Thyroid gland (tissue), 4 donors: ENCODE measurements at regions of chr12 and their contacts with region 1.

Region 1: GRCh38 chr12:49331380-49332222 is 5.4 kb downstream of the C1QL4 start:
- DNase-seq: peak; percentile 86
- H3K4me3 ChIP-seq: no peak overlapping the region
- H3K27ac ChIP-seq: no peak overlapping the region
- H3K4me1 ChIP-seq: peaks cover 3 to 18% of the 10 kb centered on the region in 2 donors
- H3K27me3 ChIP-seq: peaks cover 6% of the 10 kb centered on the region
- CTCF ChIP-seq: peak; percentile 78 to 97 (median 90)
- POLR2A ChIP-seq: no peak

Region 2: DNA sequence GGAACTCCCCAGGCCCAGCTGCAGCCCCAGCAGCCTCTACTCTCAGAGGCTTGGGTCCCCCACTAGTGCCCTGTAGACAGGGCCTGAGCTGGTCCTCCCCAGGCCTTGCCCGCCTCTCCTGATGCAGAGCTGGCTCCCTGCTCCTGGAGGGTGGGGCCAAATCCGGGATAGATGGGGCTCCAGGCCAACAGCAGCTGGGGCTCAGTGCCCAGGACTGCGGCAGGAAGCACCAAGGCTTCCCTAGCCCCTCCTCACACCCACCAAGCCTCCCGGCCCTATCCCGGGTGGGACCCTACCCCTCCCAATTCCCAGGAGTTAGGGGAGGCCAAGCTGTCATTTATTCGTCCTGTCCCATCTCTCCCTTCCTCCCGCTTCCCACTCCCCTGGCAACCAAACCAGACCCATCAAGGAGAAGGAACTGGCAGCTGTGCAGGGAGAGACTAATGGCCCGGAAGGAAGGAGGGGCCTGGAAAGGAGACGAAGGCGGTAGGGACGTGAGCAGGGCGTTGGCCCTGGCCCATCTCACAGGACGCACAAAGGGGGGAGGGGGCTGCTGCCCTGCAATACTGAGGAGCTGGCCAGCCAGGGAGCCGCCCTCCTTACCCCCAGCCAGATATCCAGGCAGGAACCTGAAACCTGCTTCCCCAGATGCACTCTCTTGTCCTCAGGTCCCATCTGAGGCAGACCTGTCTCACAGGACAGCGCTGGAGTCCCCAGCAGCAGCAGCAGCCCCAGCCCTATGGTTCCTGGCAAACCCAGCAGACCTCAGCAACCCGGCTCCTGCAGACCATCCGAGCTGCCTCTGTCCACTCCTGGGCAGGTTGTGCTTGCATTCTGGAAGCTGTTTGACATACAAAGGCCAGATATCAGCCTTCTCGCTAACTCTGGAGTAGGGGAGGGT is 38.3 kb before region 1 on chr12:
- intact Hi-C with region 1: loop called (anchors 5 kb)
- DNase-seq: no peak
- H3K4me3 ChIP-seq: no peak overlapping the region
- H3K27ac ChIP-seq: no peak overlapping the region
- H3K4me1 ChIP-seq: peaks cover 18 to 22% of the 10 kb centered on the region in 2 donors
- H3K27me3 ChIP-seq: peaks cover 12% of the 10 kb centered on the region
- CTCF ChIP-seq: no peak
- POLR2A ChIP-seq: no peak

Region 3: GRCh38 chr12:49662998-49663843 is 331.6 kb after region 1 on chr12:
- intact Hi-C with region 1: no loop called
- DNase-seq: peak; percentile 41 to 49
- H3K4me3 ChIP-seq: no peak overlapping the region
- H3K27ac ChIP-seq: peak overlapping the region; percentile 66 to 82 (median 70)
- H3K4me1 ChIP-seq: peaks cover 42 to 79% of the 10 kb centered on the region in 2 donors
- H3K27me3 ChIP-seq: no peaks in the 10 kb centered on the region
- CTCF ChIP-seq: no peak
- POLR2A ChIP-seq: no peak